ENCODE measurements at regions of chr16 and their contacts with region 1.

Region 1: GRCh38 chr16:19601083-19601976 is 45.8 kb downstream of the VPS35L start:
- H3K4me3 ChIP-seq: no peak overlapping the region
- H3K27ac ChIP-seq: no peak overlapping the region
- H3K4me1 ChIP-seq: no peaks in the 10 kb centered on the region
- CTCF ChIP-seq: peak; percentile 54; the same call in 1 of the 2 replicates

Region 2: DNA sequence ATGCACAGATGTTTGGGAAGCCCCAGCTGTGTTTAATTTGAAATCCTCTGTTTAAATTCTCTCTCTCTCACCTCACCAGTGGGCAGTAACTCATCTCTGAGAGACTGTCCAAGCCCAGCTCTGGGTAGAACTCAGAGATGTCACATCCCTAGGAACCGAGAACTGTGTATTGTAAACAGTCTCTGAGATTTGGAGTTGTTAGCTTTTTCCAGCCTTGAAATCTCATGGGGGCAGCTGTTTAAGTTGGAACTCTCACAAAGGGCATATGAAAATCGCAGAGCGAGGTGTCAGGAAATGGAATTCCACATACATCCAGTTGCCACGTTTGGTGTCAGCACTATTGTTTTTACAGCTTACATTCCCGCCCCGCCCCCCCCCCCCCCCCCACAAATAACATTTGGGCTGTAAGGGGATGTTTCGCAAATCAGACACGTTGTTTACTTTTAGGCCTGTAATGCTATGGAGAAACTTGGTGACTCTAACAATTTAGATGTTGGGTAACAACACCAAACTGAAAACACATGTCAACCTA is 11.5 kb before region 1 on chr16:
- CTCF ChIA-PET with region 1: interaction called, 38 read pairs
- POLR2A ChIA-PET with region 1: interaction called, 3 read pairs
- H3K4me3 ChIP-seq: no peak overlapping the region
- H3K27ac ChIP-seq: no peak overlapping the region
- H3K4me1 ChIP-seq: no peaks in the 10 kb centered on the region
- CTCF ChIP-seq: no peak

Region 3: GRCh38 chr16:19642501-19642900 is 41.2 kb after region 1 on chr16:
- CTCF ChIA-PET with region 1: no interaction called
- POLR2A ChIA-PET with region 1: no interaction called
- H3K4me3 ChIP-seq: no peak overlapping the region
- H3K27ac ChIP-seq: no peak overlapping the region
- H3K4me1 ChIP-seq: no peaks in the 10 kb centered on the region; the same call in 1 of the 2 replicates
- CTCF ChIP-seq: no peak

Region 4: GRCh38 chr16:19886073-19886941 is 285.0 kb after region 1 on chr16:
- CTCF ChIA-PET with region 1: interaction called, 99 read pairs
- POLR2A ChIA-PET with region 1: interaction called, 4 read pairs
- H3K4me3 ChIP-seq: no peak overlapping the region
- H3K27ac ChIP-seq: no peak overlapping the region
- H3K4me1 ChIP-seq: no peaks in the 10 kb centered on the region
- CTCF ChIP-seq: peak; percentile 87

Region 5: GRCh38 chr16:19898924-19899604 is 297.7 kb after region 1 on chr16:
- CTCF ChIA-PET with region 1: interaction called, 14 read pairs
- POLR2A ChIA-PET with region 1: no interaction called
- H3K4me3 ChIP-seq: no peak overlapping the region
- H3K27ac ChIP-seq: no peak overlapping the region
- H3K4me1 ChIP-seq: no peaks in the 10 kb centered on the region
- CTCF ChIP-seq: peak; percentile 34

Measured in HEK293 (cell line).